K562 (cell line): ENCODE measurements at regions of chr3 and their contacts with region 1.

Region 1: GRCh38 chr3:32947789-32948238 is 3.6 kb upstream of the CCR4 start:
- DNase-seq: peak; percentile 55 to 94 (median 66)
- ATAC-seq: peak; percentile 94
- H3K4me3 ChIP-seq: no peak overlapping the region
- H3K27ac ChIP-seq: no peak overlapping the region
- H3K4me1 ChIP-seq: peaks cover 3 to 10% of the 10 kb centered on the region in 2 experiments; a peak in 3 of 5 replicates
- H3K27me3 ChIP-seq: no peaks in the 10 kb centered on the region
- CTCF ChIP-seq: peak; percentile 93 to 95 (median 94)
- EP300 ChIP-seq: no peak
- POLR2A ChIP-seq: no peak
- RAD21 ChIP-seq: peak; percentile 95 to 100

Region 2: DNA sequence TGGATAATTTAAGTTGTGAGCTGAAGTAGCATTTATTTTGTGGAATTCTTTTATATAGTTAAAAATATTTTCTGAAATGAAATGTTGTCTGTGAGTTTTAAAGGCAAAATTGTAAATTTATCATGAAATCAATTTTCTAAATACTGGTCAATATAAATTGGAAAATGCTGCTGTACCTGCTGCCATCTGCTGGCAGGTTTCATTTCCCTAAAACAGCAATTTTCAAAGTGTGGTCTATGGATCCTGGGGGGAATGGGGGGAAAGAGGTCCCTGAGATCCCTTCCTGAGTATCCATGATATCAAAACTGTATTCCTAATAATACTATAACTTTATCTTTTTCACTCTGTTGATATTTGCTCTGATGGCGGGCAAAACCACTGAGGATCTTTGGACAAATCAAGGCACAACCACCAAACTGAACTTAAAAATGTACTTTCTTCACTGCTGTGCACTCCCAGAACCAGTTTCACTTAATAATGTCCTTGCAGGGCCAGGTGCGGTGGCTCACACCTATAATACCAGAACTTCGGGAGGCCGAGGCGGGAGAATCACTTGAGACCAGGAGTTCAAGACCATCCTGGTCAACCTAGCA is 13.6 kb before region 1 on chr3:
- CTCF ChIA-PET with region 1: no interaction called
- POLR2A ChIA-PET with region 1: no interaction called
- in situ Hi-C with region 1: no loop called
- intact Hi-C with region 1: no loop called
- DNase-seq: peak in 1 of 4 experiments; percentile 54
- ATAC-seq: peak; percentile 61; the same call in 2 of the 3 replicates
- H3K4me3 ChIP-seq: no peak overlapping the region
- H3K27ac ChIP-seq: no peak overlapping the region
- H3K4me1 ChIP-seq: no peaks in the 10 kb centered on the region; a peak in 1 of 5 replicates
- H3K27me3 ChIP-seq: no peaks in the 10 kb centered on the region; a peak in 1 of 5 replicates
- CTCF ChIP-seq: peak; percentile 65 to 84 (median 78)
- EP300 ChIP-seq: no peak
- POLR2A ChIP-seq: no peak
- RAD21 ChIP-seq: peak; percentile 83 to 91

Region 3: DNA sequence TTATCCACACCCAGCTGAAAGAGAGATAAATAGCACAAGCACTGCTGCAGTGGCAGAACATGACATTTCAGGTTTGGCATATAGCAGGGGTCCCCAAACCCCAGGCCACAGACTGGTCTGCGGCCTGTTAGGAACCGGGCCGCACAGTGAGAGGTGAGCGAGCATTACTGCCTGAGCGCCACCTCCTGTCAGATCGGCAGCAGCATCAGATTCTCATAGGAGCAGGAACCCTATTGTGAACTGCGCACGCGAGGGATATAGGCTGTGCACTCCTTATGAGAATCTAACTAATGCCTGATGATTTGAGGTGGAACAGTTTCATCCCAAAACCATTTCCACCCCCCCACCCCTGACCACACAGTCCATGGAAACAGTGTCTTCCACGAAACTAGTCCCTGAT is 58.3 kb after region 1 on chr3:
- CTCF ChIA-PET with region 1: no interaction called
- POLR2A ChIA-PET with region 1: interaction called, 4 read pairs
- in situ Hi-C with region 1: no loop called
- intact Hi-C with region 1: loop called (anchors 1 kb)
- DNase-seq: peak in 1 of 4 experiments; percentile 42
- ATAC-seq: peak; percentile 75
- H3K4me3 ChIP-seq: no peak overlapping the region
- H3K27ac ChIP-seq: no peak overlapping the region
- H3K4me1 ChIP-seq: peaks cover 10 to 12% of the 10 kb centered on the region in 2 experiments; a peak in 4 of 5 replicates
- H3K27me3 ChIP-seq: no peaks in the 10 kb centered on the region
- CTCF ChIP-seq: peak; percentile 29 to 35 (median 31); a peak in 2 of 6 replicates
- EP300 ChIP-seq: no peak
- POLR2A ChIP-seq: no peak
- RAD21 ChIP-seq: peak in 1 of 2 experiments; percentile 69; a peak in 2 of 4 replicates

Region 4: GRCh38 chr3:33054100-33055092 is 106.6 kb after region 1 on chr3:
- CTCF ChIA-PET with region 1: interaction called, 3 read pairs
- POLR2A ChIA-PET with region 1: no interaction called
- in situ Hi-C with region 1: no loop called
- intact Hi-C with region 1: loop called (anchors 5 kb)
- DNase-seq: peak; percentile 79 to 92 (median 86)
- ATAC-seq: peak; percentile 90
- H3K4me3 ChIP-seq: no peak overlapping the region
- H3K27ac ChIP-seq: peak overlapping the region; percentile 75
- H3K4me1 ChIP-seq: peaks cover 22 to 25% of the 10 kb centered on the region in 2 experiments
- H3K27me3 ChIP-seq: no peaks in the 10 kb centered on the region
- CTCF ChIP-seq: no peak
- EP300 ChIP-seq: peak; percentile 99
- POLR2A ChIP-seq: no peak
- RAD21 ChIP-seq: peak in 1 of 2 experiments; percentile 32; a peak in 1 of 4 replicates

Region 5: DNA sequence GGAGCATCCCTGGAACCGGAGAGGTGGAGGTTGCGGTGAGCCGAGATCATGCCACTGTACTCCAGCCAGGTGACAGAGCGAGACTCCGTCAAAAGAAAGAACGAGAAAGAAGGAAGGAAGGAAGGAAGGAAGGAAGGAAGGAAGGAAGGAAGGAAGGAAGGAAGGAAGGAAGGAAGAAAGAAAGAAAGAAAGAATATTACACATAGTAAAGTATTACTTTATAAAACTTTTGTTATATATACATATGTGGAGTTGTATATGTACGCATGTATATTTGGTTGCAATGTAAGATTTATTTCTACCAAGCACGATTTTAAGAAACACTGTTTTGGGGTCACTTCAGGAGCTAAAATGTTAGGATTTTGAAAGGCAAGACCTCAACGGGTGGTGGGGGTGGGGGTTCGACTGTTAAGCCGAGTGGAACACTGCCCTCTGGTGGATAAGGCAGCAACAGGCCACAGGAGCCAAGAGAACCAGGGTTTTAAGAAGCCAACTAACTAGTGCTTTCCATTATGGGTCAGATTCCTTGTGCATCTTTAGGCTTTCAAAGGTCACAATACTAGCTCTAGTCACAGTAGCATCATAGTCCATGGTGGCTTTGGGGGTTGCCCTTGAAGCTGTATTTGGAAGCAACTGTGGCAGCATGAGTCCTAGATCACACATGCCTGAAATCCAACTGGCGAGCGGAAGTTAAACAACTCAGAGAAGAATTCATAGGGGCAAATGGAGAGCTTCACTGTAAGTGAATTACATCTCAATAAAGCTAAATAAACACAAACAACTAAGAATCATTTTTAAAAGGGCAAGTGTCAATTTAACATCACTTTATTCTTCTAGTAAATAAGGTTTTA is 126.6 kb after region 1 on chr3:
- CTCF ChIA-PET with region 1: interaction called, 19 read pairs
- POLR2A ChIA-PET with region 1: no interaction called
- in situ Hi-C with region 1: loop called (anchors 5 kb)
- intact Hi-C with region 1: loop called (anchors 1 kb)
- DNase-seq: peak; percentile 89 to 93 (median 91)
- ATAC-seq: peak; percentile 93
- H3K4me3 ChIP-seq: no peak overlapping the region
- H3K27ac ChIP-seq: no peak overlapping the region
- H3K4me1 ChIP-seq: peaks cover 0 to 17% of the 10 kb centered on the region in 2 experiments; a peak in 4 of 5 replicates
- H3K27me3 ChIP-seq: no peaks in the 10 kb centered on the region
- CTCF ChIP-seq: peak; percentile 92 to 97 (median 96)
- EP300 ChIP-seq: no peak
- POLR2A ChIP-seq: no peak
- RAD21 ChIP-seq: peak; percentile 82 to 95

Region 6: DNA sequence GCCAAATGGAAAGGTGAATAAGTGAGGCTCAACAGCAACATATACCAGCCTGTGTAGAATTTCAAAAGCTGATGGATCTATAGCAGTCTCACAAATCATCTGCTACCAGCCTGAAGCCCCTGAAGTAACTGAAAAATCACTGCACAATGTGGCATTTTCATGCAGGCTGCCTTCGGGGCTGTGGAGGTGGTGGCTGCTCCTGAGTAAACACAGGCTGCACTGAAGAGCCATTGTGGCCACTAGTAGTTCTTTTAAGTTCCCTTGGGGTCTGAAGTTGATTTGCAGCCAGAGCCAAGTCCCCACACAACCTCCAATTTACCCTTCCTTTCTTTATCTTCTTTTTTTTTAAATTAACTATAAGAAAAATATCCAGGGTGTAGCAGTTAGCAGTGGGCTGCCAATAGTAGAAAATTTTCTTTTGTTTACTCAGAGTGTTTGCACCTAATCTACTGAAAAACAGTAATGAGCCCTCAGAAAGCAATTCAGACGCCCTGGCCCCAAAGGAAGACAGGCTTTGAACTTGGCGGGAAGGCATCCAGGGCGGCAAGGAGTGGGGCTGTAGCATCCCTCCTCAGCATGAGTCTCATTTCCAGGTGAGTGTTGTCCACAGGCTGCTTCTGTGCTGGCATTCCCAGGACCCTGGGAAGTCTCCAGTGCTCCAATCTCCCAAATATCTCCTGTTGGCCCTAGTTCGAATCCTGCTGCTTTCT is 284.1 kb after region 1 on chr3:
- CTCF ChIA-PET with region 1: no interaction called
- POLR2A ChIA-PET with region 1: no interaction called
- in situ Hi-C with region 1: no loop called
- intact Hi-C with region 1: loop called (anchors 10 kb)
- DNase-seq: no peak
- ATAC-seq: no peak
- H3K4me3 ChIP-seq: no peak overlapping the region
- H3K27ac ChIP-seq: no peak overlapping the region
- H3K4me1 ChIP-seq: peaks cover 0 to 3% of the 10 kb centered on the region in 2 experiments; a peak in 1 of 5 replicates
- H3K27me3 ChIP-seq: peaks cover 7 to 8% of the 10 kb centered on the region in 2 experiments; a peak in 2 of 5 replicates
- CTCF ChIP-seq: no peak
- EP300 ChIP-seq: no peak
- POLR2A ChIP-seq: no peak
- RAD21 ChIP-seq: no peak

Region 7: GRCh38 chr3:33787328-33788009 is 839.7 kb after region 1 on chr3:
- CTCF ChIA-PET with region 1: no interaction called
- POLR2A ChIA-PET with region 1: no interaction called
- in situ Hi-C with region 1: no loop called
- intact Hi-C with region 1: loop called (anchors 2 kb)
- DNase-seq: peak; percentile 50 to 88 (median 64)
- ATAC-seq: peak; percentile 85
- H3K4me3 ChIP-seq: peak overlapping the region; percentile 13; the same call in 1 of the 2 replicates
- H3K27ac ChIP-seq: no peak overlapping the region
- H3K4me1 ChIP-seq: peaks cover 10 to 37% of the 10 kb centered on the region in 2 experiments
- H3K27me3 ChIP-seq: no peaks in the 10 kb centered on the region
- CTCF ChIP-seq: peak; percentile 90 to 95 (median 91)
- EP300 ChIP-seq: no peak
- POLR2A ChIP-seq: no peak
- RAD21 ChIP-seq: peak; percentile 94 to 95